ENCODE measurements at regions of chr17 and their contacts with region 1.

Region 1: GRCh38 chr17:64262417-64263260 is at the start of gene TEX2:
- DNase-seq: no peak
- ATAC-seq: peak; percentile 62
- H3K4me3 ChIP-seq: peak within 1 kb of the TSS; percentile 88
- H3K27ac ChIP-seq: peak within 1 kb of the TSS; percentile 67
- H3K4me1 ChIP-seq: peaks cover 6% of the 10 kb centered on the region; the same call in 1 of the 2 replicates
- H3K27me3 ChIP-seq: no peaks in the 10 kb centered on the region
- CTCF ChIP-seq: no peak
- EP300 ChIP-seq: no peak
- POLR2A ChIP-seq: peak; percentile 70
- RAD21 ChIP-seq: no peak
- polyA plus RNA-seq, gene TEX2: 3.8 to 4.3 TPM

Region 2: DNA sequence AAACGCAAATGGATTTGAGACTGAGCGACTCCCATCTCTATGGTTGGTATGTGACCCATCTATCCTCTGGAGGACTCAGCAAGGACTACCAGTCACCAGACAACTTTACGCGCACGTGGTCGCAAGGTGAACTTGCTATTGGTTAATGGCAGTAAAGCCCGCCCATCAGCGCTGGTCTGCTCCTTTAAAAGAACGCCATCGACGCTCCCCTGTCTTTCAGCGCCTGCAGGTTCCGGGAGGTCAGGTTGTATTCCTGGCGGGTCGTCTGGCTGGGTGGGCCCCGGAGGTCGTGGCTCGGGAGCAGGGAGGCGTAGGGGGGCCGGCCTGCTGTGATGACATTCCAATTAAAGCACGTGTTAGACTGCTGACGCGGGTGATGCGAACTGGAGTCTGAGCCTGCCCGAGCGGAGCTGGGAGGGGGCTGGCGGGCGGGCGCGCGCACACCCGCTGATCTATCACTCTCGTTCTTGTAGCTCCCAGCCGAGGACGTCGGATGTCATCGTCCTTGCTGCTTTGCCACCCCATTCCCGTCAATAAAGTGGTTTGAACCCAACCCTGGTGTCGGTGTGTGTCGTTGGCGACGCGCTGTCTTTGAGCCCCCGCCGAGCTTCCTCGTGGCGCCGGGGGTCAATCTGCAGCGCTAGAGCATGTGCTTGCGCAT is 116.8 kb before region 1 on chr17:
- CTCF ChIA-PET with region 1: no interaction called
- POLR2A ChIA-PET with region 1: interaction called, 4 read pairs
- RAD21 ChIA-PET with region 1: interaction called, 4 read pairs
- SMC1A ChIA-PET with region 1: no interaction called
- in situ Hi-C with region 1: no loop called
- intact Hi-C with region 1: loop called (anchors 5 kb)
- DNase-seq: peak; percentile 97
- ATAC-seq: peak; percentile 95
- H3K4me3 ChIP-seq: peak overlapping the region; percentile 79
- H3K27ac ChIP-seq: peak overlapping the region; percentile 94
- H3K4me1 ChIP-seq: peaks cover 3% of the 10 kb centered on the region; the same call in 1 of the 2 replicates
- H3K27me3 ChIP-seq: no peaks in the 10 kb centered on the region
- CTCF ChIP-seq: no peak
- EP300 ChIP-seq: no peak
- POLR2A ChIP-seq: peak; percentile 98
- RAD21 ChIP-seq: no peak

Region 3: DNA sequence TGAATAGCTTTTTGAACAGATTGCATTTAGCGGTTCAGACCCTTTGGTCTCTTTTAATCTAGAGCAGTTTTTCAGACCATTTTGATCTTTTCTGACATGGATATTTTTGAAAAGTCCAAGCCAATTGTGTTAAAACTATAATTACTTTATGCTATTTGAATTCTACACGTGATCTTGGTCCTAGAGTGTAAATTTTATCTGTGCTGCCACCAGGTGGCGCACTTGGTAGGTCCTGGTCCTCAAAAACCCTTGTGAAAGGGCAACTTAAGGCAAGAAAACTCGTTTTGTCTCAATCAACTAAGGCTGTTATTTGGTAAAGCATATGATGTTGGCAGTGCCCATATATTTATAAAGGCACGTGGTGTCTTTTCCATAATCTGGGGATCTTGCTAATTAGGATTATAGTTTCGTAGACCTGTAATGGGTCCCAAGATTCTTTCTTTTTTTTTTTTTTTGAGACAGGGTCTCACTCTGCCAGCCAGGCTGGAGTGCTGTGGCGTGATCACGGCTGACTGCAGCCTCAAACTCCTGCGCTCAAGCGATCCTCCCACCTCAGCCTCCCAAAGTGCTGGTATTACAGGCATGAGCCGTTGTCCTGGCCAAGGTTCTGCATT is 44.3 kb after region 1 on chr17:
- CTCF ChIA-PET with region 1: no interaction called
- POLR2A ChIA-PET with region 1: no interaction called
- RAD21 ChIA-PET with region 1: no interaction called
- SMC1A ChIA-PET with region 1: no interaction called
- in situ Hi-C with region 1: no loop called
- intact Hi-C with region 1: no loop called
- DNase-seq: no peak
- ATAC-seq: peak; percentile 83
- H3K4me3 ChIP-seq: no peak overlapping the region
- H3K27ac ChIP-seq: no peak overlapping the region
- H3K4me1 ChIP-seq: no peaks in the 10 kb centered on the region
- H3K27me3 ChIP-seq: no peaks in the 10 kb centered on the region
- CTCF ChIP-seq: peak; percentile 64 to 86 (median 84)
- EP300 ChIP-seq: no peak
- POLR2A ChIP-seq: no peak
- RAD21 ChIP-seq: peak; percentile 68

Region 4: GRCh38 chr17:64496786-64497564 is 234.3 kb after region 1 on chr17 and contains the start of gene POLG2:
- CTCF ChIA-PET with region 1: no interaction called
- POLR2A ChIA-PET with region 1: interaction called, 11 read pairs
- RAD21 ChIA-PET with region 1: no interaction called
- SMC1A ChIA-PET with region 1: no interaction called
- in situ Hi-C with region 1: no loop called
- intact Hi-C with region 1: no loop called
- DNase-seq: peak; percentile 75
- ATAC-seq: peak; percentile 88
- H3K4me3 ChIP-seq: peak within 1 kb of the TSS; percentile 88
- H3K27ac ChIP-seq: peak within 1 kb of the TSS; percentile 85
- H3K4me1 ChIP-seq: peaks cover 11% of the 10 kb centered on the region; the same call in 1 of the 2 replicates
- H3K27me3 ChIP-seq: no peaks in the 10 kb centered on the region
- CTCF ChIP-seq: peak; percentile 63 to 71 (median 66)
- EP300 ChIP-seq: no peak; a peak in 1 of 4 replicates
- POLR2A ChIP-seq: peak; percentile 95
- RAD21 ChIP-seq: peak; percentile 36; the same call in 1 of the 2 replicates
- polyA plus RNA-seq, gene POLG2: 10.2 to 13.5 TPM